GM12878 (cell line): ENCODE measurements at regions of chr15 and their contacts with region 1.

Region 1: DNA sequence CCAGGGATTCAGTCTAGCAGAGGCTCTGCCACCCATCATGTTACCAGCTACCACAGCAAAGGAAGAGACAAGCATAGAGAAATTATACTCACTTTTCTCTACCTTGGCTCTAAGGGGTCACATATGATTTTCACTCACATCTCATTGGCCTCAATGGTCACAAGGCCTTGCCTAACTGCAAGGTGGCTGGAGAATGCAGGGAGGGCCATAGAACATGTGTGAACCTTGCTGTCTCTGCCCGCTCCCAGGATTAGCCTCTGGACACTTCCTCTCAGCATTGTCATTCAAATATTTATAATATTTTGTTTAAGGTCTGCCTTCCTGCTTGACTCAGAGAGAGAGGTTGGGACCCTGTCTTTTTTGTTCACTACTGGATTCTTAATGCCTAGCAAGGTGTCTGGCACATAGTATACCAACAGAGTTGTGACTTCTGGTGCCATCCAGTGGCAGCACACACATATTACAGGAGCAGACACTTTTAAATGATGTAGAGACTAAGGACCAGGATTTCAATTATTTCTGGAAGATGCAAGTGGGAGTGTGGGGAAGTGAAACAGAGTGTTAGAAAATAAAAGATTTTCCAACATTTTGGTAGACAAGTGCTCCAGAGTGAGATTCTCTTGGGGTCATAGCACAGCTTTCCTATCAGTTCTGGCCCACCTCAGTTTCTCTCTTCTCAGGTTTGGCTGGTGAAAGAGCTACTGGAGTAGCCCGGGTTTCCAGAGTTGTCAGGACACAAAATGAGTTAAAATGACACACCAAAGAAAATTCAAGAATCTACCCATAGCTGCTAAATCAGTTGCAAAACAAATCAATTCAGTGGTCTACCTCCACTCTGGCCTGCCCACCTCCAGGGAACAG is 119.0 kb upstream of the RASGRP1 start:
- DNase-seq: no peak
- ATAC-seq: peak; percentile 94
- H3K4me3 ChIP-seq: no peak overlapping the region
- H3K27ac ChIP-seq: no peak overlapping the region
- H3K4me1 ChIP-seq: peaks cover 5% of the 10 kb centered on the region
- H3K27me3 ChIP-seq: no peaks in the 10 kb centered on the region
- CTCF ChIP-seq: peak; percentile 73 to 91 (median 88)
- EP300 ChIP-seq: no peak
- POLR2A ChIP-seq: no peak
- RAD21 ChIP-seq: peak; percentile 99

Region 2: GRCh38 chr15:38453971-38454695 is 229.5 kb before region 1 on chr15 and contains the start of gene FAM98B:
- CTCF ChIA-PET with region 1: interaction called, 54 read pairs
- POLR2A ChIA-PET with region 1: interaction called, 3 read pairs
- RAD21 ChIA-PET with region 1: interaction called, 18 read pairs
- SMC1A ChIA-PET with region 1: interaction called, 48 read pairs
- in situ Hi-C with region 1: no loop called
- intact Hi-C with region 1: no loop called
- DNase-seq: peak; percentile 62
- ATAC-seq: peak; percentile 93
- H3K4me3 ChIP-seq: peak within 1 kb of the TSS; percentile 84
- H3K27ac ChIP-seq: peak within 1 kb of the TSS; percentile 85
- H3K4me1 ChIP-seq: no peaks in the 10 kb centered on the region
- H3K27me3 ChIP-seq: no peaks in the 10 kb centered on the region
- CTCF ChIP-seq: no peak
- EP300 ChIP-seq: no peak; a peak in 1 of 4 replicates
- POLR2A ChIP-seq: peak; percentile 94
- RAD21 ChIP-seq: no peak
- polyA plus RNA-seq, gene FAM98B: 4.2 to 8.4 TPM

Region 3: GRCh38 chr15:38508647-38509046 is 175.0 kb before region 1 on chr15:
- CTCF ChIA-PET with region 1: interaction called, 37 read pairs
- POLR2A ChIA-PET with region 1: no interaction called
- RAD21 ChIA-PET with region 1: interaction called, 5 read pairs
- SMC1A ChIA-PET with region 1: interaction called, 208 read pairs
- in situ Hi-C with region 1: no loop called
- intact Hi-C with region 1: no loop called
- DNase-seq: peak; percentile 47
- ATAC-seq: peak; percentile 68
- H3K4me3 ChIP-seq: no peak overlapping the region
- H3K27ac ChIP-seq: peak overlapping the region; percentile 50
- H3K4me1 ChIP-seq: peaks cover 11% of the 10 kb centered on the region
- H3K27me3 ChIP-seq: no peaks in the 10 kb centered on the region
- CTCF ChIP-seq: no peak
- EP300 ChIP-seq: no peak
- POLR2A ChIP-seq: no peak
- RAD21 ChIP-seq: no peak

Region 4: DNA sequence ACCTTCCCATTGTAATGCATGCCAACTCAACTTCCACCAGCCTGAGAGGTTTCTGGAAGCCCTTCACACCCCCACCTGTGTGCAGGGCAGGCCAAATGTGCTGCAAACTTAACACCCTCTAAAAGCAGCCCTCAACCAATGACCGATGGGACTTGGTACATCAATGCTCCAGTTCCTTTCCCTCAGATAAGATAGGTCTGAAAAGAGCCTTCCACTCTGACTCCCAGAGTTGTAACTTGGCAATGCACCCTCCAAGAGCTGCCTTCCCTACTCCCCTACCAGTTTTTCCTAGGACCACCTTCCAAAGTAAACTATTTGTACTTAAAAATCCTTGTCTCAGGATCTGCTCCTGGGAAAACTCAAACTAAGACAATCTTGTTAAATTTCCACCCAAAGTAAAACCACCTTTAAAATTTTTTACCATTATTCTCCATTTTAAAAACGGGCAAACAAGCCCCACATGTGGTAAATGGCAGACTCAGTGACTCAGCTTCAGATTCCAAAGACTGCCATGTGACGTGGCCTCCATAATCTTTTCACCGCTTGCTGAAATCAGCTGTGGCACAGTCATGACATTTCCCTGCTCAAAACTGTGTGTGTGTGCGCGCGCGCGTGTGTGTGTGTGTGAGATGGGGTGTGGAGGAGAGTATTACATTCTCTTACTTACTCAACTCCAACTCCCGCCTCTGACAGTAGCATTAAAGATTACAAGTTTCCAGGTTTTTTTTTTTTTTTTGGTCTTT is 136.2 kb before region 1 on chr15:
- CTCF ChIA-PET with region 1: interaction called, 34 read pairs
- POLR2A ChIA-PET with region 1: no interaction called
- RAD21 ChIA-PET with region 1: interaction called, 38 read pairs
- SMC1A ChIA-PET with region 1: interaction called, 77 read pairs
- in situ Hi-C with region 1: no loop called
- intact Hi-C with region 1: no loop called
- DNase-seq: no peak
- ATAC-seq: no peak
- H3K4me3 ChIP-seq: no peak overlapping the region
- H3K27ac ChIP-seq: no peak overlapping the region
- H3K4me1 ChIP-seq: no peaks in the 10 kb centered on the region
- H3K27me3 ChIP-seq: no peaks in the 10 kb centered on the region
- CTCF ChIP-seq: no peak
- EP300 ChIP-seq: no peak
- POLR2A ChIP-seq: no peak
- RAD21 ChIP-seq: no peak

Region 5: DNA sequence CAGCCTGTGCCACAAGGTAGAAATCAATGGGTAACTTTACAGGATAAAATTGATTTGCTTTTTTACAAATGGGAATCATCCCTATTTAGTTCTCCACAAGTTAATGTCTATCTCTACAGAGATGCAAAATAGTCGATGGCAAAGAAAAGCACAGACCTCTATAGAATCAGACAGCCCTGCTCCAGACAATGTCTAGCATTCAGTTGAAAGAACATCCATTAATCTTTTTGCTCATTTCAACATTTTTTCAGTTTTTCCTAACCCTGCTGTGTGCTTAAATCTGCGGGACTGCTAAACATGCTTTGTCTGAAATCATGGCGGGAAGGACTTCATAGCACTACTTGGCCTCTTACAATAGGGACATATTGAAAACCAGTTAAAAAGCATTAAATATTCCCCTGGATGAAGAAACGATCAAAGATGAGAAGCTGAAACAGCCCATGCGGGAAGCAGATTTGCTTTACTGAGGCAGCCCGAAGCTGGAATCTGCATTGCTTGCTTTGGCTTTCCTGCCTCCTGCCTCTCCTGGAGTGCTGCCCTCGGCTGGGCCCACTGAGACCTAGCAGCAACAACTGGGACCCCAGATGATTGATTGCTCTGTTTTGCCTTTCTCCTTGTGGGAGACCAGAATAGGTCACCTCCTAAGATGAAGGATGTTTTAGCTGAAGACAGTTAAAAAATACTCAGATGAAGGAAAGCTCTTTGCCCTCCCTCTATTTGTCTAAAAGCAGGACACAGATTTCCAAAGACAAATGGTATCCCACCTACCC is 80.5 kb before region 1 on chr15:
- CTCF ChIA-PET with region 1: interaction called, 11 read pairs
- POLR2A ChIA-PET with region 1: interaction called, 4 read pairs
- RAD21 ChIA-PET with region 1: interaction called, 11 read pairs
- SMC1A ChIA-PET with region 1: interaction called, 1,803 read pairs
- in situ Hi-C with region 1: no loop called
- intact Hi-C with region 1: no loop called
- DNase-seq: no peak
- ATAC-seq: peak; percentile 22; the same call in 2 of the 3 replicates
- H3K4me3 ChIP-seq: no peak overlapping the region
- H3K27ac ChIP-seq: no peak overlapping the region
- H3K4me1 ChIP-seq: no peaks in the 10 kb centered on the region; the same call in 1 of the 2 replicates
- H3K27me3 ChIP-seq: peaks cover 0 to 3% of the 10 kb centered on the region in 2 experiments; a peak in 1 of 4 replicates
- CTCF ChIP-seq: no peak
- EP300 ChIP-seq: no peak
- POLR2A ChIP-seq: no peak
- RAD21 ChIP-seq: no peak

Region 6: GRCh38 chr15:38647683-38648082 is 35.9 kb before region 1 on chr15:
- CTCF ChIA-PET with region 1: interaction called, 115 read pairs
- POLR2A ChIA-PET with region 1: interaction called, 17 read pairs
- RAD21 ChIA-PET with region 1: interaction called, 517 read pairs
- SMC1A ChIA-PET with region 1: interaction called, 1,803 read pairs
- in situ Hi-C with region 1: no loop called
- intact Hi-C with region 1: no loop called
- DNase-seq: no peak
- ATAC-seq: no peak
- H3K4me3 ChIP-seq: no peak overlapping the region
- H3K27ac ChIP-seq: no peak overlapping the region
- H3K4me1 ChIP-seq: peaks cover 27% of the 10 kb centered on the region
- H3K27me3 ChIP-seq: no peaks in the 10 kb centered on the region
- CTCF ChIP-seq: peak in 2 of 3 experiments; percentile 5 to 17; a peak in 1 of 6 replicates
- EP300 ChIP-seq: no peak
- POLR2A ChIP-seq: no peak
- RAD21 ChIP-seq: peak; percentile 23; the same call in 1 of the 2 replicates